OCI-LY7 (cell line): ENCODE measurements at regions of chr3 and their contacts with region 1.

Region 1: DNA sequence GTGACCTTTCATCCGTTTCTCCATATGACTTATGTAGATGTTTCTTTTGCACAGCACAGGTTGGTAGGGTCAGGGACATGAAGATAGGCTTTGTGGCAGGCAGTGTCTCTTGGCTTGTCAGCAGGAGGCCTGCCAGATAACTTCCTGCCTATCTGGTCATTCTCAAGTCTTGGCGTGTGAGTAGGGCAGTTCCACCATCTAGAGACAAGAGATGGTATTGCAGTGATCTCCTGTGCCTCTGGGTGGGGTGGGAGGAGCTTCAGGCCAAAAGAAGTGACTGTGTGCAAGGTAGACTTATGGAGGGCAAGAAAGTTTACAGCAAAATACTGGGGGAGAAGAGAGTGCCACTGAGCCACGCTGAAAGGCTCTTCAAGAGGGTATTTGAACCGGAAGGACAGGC is 11.0 kb downstream of the TEX264 start:
- DNase-seq: peak; percentile 87
- H3K4me3 ChIP-seq: no peak overlapping the region
- H3K27ac ChIP-seq: peak overlapping the region; percentile 23
- H3K4me1 ChIP-seq: peaks cover 48% of the 10 kb centered on the region
- CTCF ChIP-seq: peak; percentile 88

Region 2: GRCh38 chr3:51637941-51638471 is 44.1 kb before region 1 on chr3:
- CTCF ChIA-PET with region 1: interaction called, 3 read pairs
- POLR2A ChIA-PET with region 1: no interaction called
- intact Hi-C with region 1: loop called (anchors 2 kb)
- DNase-seq: peak; percentile 72
- H3K4me3 ChIP-seq: no peak overlapping the region
- H3K27ac ChIP-seq: no peak overlapping the region
- H3K4me1 ChIP-seq: no peaks in the 10 kb centered on the region
- CTCF ChIP-seq: peak; percentile 92

Region 3: GRCh38 chr3:51670823-51671733 is 11.0 kb before region 1 on chr3 and contains the start of gene TEX264:
- CTCF ChIA-PET with region 1: interaction called, 17 read pairs
- POLR2A ChIA-PET with region 1: interaction called, 12 read pairs
- intact Hi-C with region 1: no loop called
- DNase-seq: peak; percentile 93
- H3K4me3 ChIP-seq: peak within 1 kb of the TSS; percentile 95
- H3K27ac ChIP-seq: peak within 1 kb of the TSS; percentile 72
- H3K4me1 ChIP-seq: peaks cover 36% of the 10 kb centered on the region
- CTCF ChIP-seq: no peak
- total RNA-seq, gene TEX264: 42.4 and 50.3 TPM in 2 replicates